ENCODE measurements at regions of chr15 and their contacts with region 1.

Region 1: DNA sequence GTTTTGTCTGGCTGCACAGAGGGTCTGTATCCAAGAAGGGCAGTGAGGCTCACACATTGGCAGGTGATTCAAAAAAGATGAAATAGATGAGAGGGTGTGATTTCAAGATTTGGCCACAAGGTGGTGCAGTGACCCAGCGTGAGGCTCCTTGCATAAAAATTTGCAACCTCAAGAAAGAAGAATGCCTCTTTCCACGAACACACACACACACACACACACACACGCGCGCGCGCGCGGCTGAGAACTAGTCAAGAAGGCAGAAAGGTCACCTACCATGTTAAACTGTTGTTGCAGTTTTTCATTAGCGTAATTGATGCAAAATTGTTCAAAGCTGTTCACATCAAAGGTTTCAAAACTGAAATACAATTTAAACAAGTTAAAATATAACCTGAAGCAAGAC is 39.2 kb downstream of the MYO5C start:
- DNase-seq: peak; percentile 73
- H3K4me3 Mint-ChIP-seq: no peak overlapping the region
- H3K27ac Mint-ChIP-seq: no peak overlapping the region
- H3K4me1 Mint-ChIP-seq: peaks cover 39% of the 10 kb centered on the region
- H3K27me3 Mint-ChIP-seq: no peaks in the 10 kb centered on the region
- CTCF ChIP-seq: peak; percentile 78

Region 2: DNA sequence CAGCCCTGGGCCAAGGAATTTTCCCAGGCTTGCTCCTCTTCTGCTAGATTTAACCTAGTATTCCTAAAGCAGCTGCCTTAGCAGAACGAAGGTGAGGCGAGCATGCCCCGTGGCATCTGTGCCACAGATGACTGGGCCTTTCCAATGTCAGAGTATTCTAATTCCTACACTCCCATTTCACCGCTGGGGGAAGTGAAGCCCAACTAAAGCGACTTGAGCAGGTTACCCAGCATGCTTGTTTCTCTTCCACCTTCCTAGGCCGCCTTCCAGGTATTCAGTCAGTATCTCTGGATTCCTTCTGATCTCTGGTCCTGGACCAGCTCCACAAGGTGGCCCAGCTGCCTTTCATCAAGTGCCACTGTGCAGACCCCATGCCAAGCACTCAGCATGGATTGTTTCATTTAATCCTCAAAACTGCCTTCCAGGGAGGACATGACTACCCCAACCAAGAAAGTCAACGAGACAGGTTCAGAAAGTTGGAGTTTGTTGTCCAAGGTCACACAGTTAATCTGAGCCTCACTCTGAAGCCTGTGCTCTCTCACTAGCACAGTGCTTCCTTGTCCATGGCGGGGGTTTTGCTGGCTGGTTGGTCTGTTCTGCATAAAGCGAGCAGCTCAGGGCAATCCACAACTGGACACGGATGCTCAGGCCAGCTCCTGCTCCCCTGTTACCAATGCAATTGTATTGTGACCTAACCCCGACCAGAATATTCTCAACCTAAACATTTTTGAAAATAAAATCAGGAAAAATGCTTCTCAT is 24.1 kb after region 1 on chr15:
- CTCF ChIA-PET with region 1: interaction called, 29 read pairs
- POLR2A ChIA-PET with region 1: interaction called, 4 read pairs
- intact Hi-C with region 1: no loop called
- DNase-seq: no peak
- H3K4me3 Mint-ChIP-seq: no peak overlapping the region
- H3K27ac Mint-ChIP-seq: no peak overlapping the region
- H3K4me1 Mint-ChIP-seq: no peaks in the 10 kb centered on the region
- H3K27me3 Mint-ChIP-seq: no peaks in the 10 kb centered on the region
- CTCF ChIP-seq: no peak

Region 3: GRCh38 chr15:52295421-52296001 is 39.1 kb after region 1 on chr15 and contains the start of gene MYO5C:
- CTCF ChIA-PET with region 1: interaction called, 34 read pairs
- POLR2A ChIA-PET with region 1: interaction called, 11 read pairs
- intact Hi-C with region 1: loop called (anchors 5 kb)
- DNase-seq: peak; percentile 91
- H3K4me3 Mint-ChIP-seq: peak within 1 kb of the TSS; percentile 69
- H3K27ac Mint-ChIP-seq: peak within 1 kb of the TSS; percentile 77
- H3K4me1 Mint-ChIP-seq: peaks cover 31% of the 10 kb centered on the region
- H3K27me3 Mint-ChIP-seq: no peaks in the 10 kb centered on the region
- CTCF ChIP-seq: no peak
- total RNA-seq, gene MYO5C: 25.7 and 29.4 TPM in 2 replicates

Region 4: DNA sequence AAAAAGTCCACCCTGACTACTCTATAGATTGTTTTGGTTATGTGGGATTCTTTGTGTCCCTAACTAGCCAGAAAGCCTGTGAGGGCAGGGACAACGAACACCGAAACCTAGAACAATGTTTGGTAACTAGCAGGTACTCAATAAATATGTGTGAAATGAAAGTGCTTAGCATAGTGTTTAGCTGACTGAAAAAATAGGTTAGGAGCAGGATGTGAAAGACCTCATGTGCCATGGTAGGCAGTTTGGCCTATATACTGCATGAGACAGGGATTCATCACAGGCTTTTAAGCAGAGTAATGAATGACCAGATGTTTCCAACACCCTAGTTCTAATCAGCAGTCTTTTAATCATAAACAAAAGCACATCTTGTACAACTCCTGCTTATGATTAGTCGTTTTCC is 208.1 kb after region 1 on chr15:
- CTCF ChIA-PET with region 1: interaction called, 4 read pairs
- POLR2A ChIA-PET with region 1: interaction called, 3 read pairs
- intact Hi-C with region 1: loop called (anchors 5 kb)
- DNase-seq: no peak
- H3K4me3 Mint-ChIP-seq: no peak overlapping the region
- H3K27ac Mint-ChIP-seq: no peak overlapping the region
- H3K4me1 Mint-ChIP-seq: peaks cover 6% of the 10 kb centered on the region
- H3K27me3 Mint-ChIP-seq: no peaks in the 10 kb centered on the region
- CTCF ChIP-seq: no peak

Region 5: DNA sequence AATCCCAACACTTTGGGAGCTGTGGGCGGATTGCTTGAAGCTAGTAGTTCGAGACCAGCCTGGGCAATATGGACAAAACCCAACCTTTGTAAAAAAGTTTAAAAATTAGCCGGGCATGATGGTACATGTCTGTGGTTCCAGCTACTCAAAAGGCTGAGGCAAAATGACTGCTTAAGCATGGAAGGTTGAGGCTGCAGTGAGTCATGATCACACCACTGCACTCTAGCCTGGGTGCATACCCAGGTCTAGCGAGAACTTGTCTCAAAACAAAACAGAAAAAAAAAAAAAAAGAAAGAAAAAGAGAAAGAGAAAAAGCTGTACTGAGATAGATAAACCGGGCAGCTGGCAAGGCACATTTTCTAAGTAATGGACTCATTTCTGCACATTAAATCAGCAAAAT is 301.8 kb after region 1 on chr15:
- CTCF ChIA-PET with region 1: interaction called, 11 read pairs
- POLR2A ChIA-PET with region 1: interaction called, 4 read pairs
- intact Hi-C with region 1: no loop called
- DNase-seq: peak; percentile 86
- H3K4me3 Mint-ChIP-seq: peak overlapping the region; percentile 61
- H3K27ac Mint-ChIP-seq: peak overlapping the region; percentile 88
- H3K4me1 Mint-ChIP-seq: peaks cover 41% of the 10 kb centered on the region
- H3K27me3 Mint-ChIP-seq: no peaks in the 10 kb centered on the region
- CTCF ChIP-seq: no peak

Region 6: GRCh38 chr15:52568601-52569256 is 312.4 kb after region 1 on chr15 and contains the start of gene ARPP19:
- CTCF ChIA-PET with region 1: interaction called, 12 read pairs
- POLR2A ChIA-PET with region 1: interaction called, 5 read pairs
- intact Hi-C with region 1: loop called (anchors 1 kb)
- DNase-seq: peak; percentile 96
- H3K4me3 Mint-ChIP-seq: peak within 1 kb of the TSS; percentile 77
- H3K27ac Mint-ChIP-seq: peak within 1 kb of the TSS; percentile 85
- H3K4me1 Mint-ChIP-seq: peaks cover 5% of the 10 kb centered on the region
- H3K27me3 Mint-ChIP-seq: no peaks in the 10 kb centered on the region
- CTCF ChIP-seq: no peak
- total RNA-seq, gene ARPP19: 172 and 213 TPM in 2 replicates

Region 7: DNA sequence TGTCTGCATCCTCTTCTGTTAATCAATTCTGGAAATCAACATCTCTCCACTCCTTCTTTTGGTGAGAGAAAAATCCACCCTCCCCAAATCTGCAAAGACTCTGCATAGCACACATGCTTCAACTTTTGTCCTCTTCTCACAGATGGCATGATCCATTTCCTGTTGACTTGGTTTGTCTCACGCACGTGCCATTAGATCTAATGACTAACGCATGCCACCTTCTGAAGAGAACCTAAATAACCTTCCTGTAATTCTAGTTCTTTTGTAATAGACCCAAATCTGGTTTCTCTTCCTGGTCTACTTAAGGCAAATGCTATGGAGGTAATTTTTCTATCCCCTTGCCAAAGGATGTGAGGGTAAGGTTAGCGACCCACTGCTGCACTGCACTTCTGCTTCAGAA is 473.8 kb after region 1 on chr15:
- CTCF ChIA-PET with region 1: interaction called, 62 read pairs
- POLR2A ChIA-PET with region 1: interaction called, 6 read pairs
- intact Hi-C with region 1: loop called (anchors 1 kb)
- DNase-seq: peak; percentile 66
- H3K4me3 Mint-ChIP-seq: no peak overlapping the region
- H3K27ac Mint-ChIP-seq: peak overlapping the region; percentile 49
- H3K4me1 Mint-ChIP-seq: peaks cover 13% of the 10 kb centered on the region
- H3K27me3 Mint-ChIP-seq: no peaks in the 10 kb centered on the region
- CTCF ChIP-seq: no peak

Measured in MCF 10A (cell line).